Activated B cell treated with CpG ODN at 0.5 μM for 24 hours (primary cell): ENCODE measurements at regions of chr7 and their contacts with region 1.

Region 1: GRCh38 chr7:24979863-24980533 is at the start of gene OSBPL3:
- DNase-seq: peak; percentile 92
- ATAC-seq: peak; percentile 90
- H3K4me3 Mint-ChIP-seq: peak within 1 kb of the TSS; percentile 98
- H3K27ac Mint-ChIP-seq: peak within 1 kb of the TSS; percentile 94
- H3K4me1 Mint-ChIP-seq: peaks cover 53% of the 10 kb centered on the region
- H3K27me3 Mint-ChIP-seq: no peaks in the 10 kb centered on the region
- CTCF ChIP-seq: no peak
- total RNA-seq, gene OSBPL3: 29.3 and 33.3 TPM in 2 replicates

Region 2: GRCh38 chr7:24715661-24716479 is 264.1 kb before region 1 on chr7:
- CTCF ChIA-PET with region 1: no interaction called
- POLR2A ChIA-PET with region 1: no interaction called
- intact Hi-C with region 1: loop called (anchors 5 kb)
- DNase-seq: no peak
- ATAC-seq: no peak
- H3K4me3 Mint-ChIP-seq: peak overlapping the region; percentile 64
- H3K27ac Mint-ChIP-seq: peak overlapping the region; percentile 61
- H3K4me1 Mint-ChIP-seq: peaks cover 65% of the 10 kb centered on the region
- H3K27me3 Mint-ChIP-seq: no peaks in the 10 kb centered on the region
- CTCF ChIP-seq: no peak

Region 3: DNA sequence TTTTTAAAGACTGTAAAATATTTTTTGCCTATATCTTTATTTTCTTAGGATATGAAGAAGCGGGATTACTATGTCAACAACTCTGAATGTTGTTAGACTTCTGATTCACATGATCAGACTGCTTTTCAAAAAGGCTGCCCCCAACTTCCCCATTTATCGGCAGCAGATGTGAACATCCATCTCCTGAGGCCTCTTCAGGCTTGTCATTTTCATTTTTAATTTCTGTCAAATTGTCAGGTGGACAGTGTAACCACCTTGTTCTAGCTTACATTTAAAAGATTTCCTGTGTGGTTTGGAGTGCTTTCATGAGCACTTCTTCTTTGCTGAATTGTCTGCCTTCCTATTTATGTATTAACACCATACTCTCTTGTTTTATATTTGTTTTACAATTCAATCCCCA is 143.9 kb before region 1 on chr7:
- CTCF ChIA-PET with region 1: interaction called, 5 read pairs
- POLR2A ChIA-PET with region 1: interaction called, 16 read pairs
- intact Hi-C with region 1: loop called (anchors 1 kb)
- DNase-seq: no peak
- ATAC-seq: peak; percentile 79
- H3K4me3 Mint-ChIP-seq: peak overlapping the region; percentile 39
- H3K27ac Mint-ChIP-seq: peak overlapping the region; percentile 99
- H3K4me1 Mint-ChIP-seq: peaks cover 75% of the 10 kb centered on the region
- H3K27me3 Mint-ChIP-seq: no peaks in the 10 kb centered on the region
- CTCF ChIP-seq: no peak

Region 4: DNA sequence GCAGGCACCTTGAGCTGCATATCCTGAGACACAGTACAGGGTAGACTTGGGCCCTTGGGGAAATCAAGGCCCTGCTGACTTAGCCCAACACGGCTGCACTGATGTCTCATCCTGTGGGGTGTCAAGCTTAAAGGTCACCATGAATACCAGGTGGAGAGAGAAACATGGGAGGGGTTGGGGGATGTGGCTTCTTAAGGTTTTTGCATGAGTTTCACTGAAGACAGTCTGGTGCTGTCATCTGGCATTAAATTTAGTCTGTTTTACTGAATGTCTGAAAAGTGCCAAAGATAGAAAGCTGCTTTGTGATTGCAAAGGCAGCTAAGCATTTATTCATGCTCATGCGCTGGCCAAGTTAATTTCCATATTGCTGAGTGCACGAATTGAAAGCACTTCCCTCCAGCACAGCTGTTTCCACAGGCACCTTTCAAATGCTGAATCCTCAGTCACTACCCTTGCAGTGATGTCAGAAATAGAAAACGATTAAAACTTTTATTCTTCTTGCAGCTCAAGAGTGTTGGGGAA is 102.1 kb before region 1 on chr7:
- CTCF ChIA-PET with region 1: interaction called, 12 read pairs
- POLR2A ChIA-PET with region 1: interaction called, 31 read pairs
- intact Hi-C with region 1: loop called (anchors 1 kb)
- DNase-seq: no peak
- ATAC-seq: peak; percentile 90
- H3K4me3 Mint-ChIP-seq: peak overlapping the region; percentile 64
- H3K27ac Mint-ChIP-seq: peak overlapping the region; percentile 83
- H3K4me1 Mint-ChIP-seq: peaks cover 34% of the 10 kb centered on the region
- H3K27me3 Mint-ChIP-seq: no peaks in the 10 kb centered on the region
- CTCF ChIP-seq: no peak

Region 5: GRCh38 chr7:24907311-24907886 is 72.6 kb before region 1 on chr7:
- CTCF ChIA-PET with region 1: interaction called, 3 read pairs
- POLR2A ChIA-PET with region 1: interaction called, 3 read pairs
- intact Hi-C with region 1: loop called (anchors 1 kb)
- DNase-seq: no peak
- ATAC-seq: peak; percentile 62
- H3K4me3 Mint-ChIP-seq: no peak overlapping the region
- H3K27ac Mint-ChIP-seq: no peak overlapping the region
- H3K4me1 Mint-ChIP-seq: peaks cover 32% of the 10 kb centered on the region
- H3K27me3 Mint-ChIP-seq: no peaks in the 10 kb centered on the region
- CTCF ChIP-seq: no peak

Region 6: GRCh38 chr7:25069900-25070443 is 90.0 kb after region 1 on chr7:
- CTCF ChIA-PET with region 1: interaction called, 3 read pairs
- POLR2A ChIA-PET with region 1: no interaction called
- intact Hi-C with region 1: loop called (anchors 1 kb)
- DNase-seq: no peak
- ATAC-seq: peak; percentile 49
- H3K4me3 Mint-ChIP-seq: no peak overlapping the region
- H3K27ac Mint-ChIP-seq: no peak overlapping the region
- H3K4me1 Mint-ChIP-seq: peaks cover 7% of the 10 kb centered on the region
- H3K27me3 Mint-ChIP-seq: no peaks in the 10 kb centered on the region
- CTCF ChIP-seq: peak; percentile 55

Region 7: GRCh38 chr7:25179771-25180591 is 200.0 kb after region 1 on chr7:
- CTCF ChIA-PET with region 1: no interaction called
- POLR2A ChIA-PET with region 1: no interaction called
- intact Hi-C with region 1: loop called (anchors 1 kb)
- DNase-seq: peak; percentile 100
- ATAC-seq: peak; percentile 97
- H3K4me3 Mint-ChIP-seq: peak overlapping the region; percentile 87
- H3K27ac Mint-ChIP-seq: peak overlapping the region; percentile 95
- H3K4me1 Mint-ChIP-seq: peaks cover 15% of the 10 kb centered on the region
- H3K27me3 Mint-ChIP-seq: no peaks in the 10 kb centered on the region
- CTCF ChIP-seq: peak; percentile 46